ENCODE measurements at regions of chr2 and their contacts with region 1.

Region 1: DNA sequence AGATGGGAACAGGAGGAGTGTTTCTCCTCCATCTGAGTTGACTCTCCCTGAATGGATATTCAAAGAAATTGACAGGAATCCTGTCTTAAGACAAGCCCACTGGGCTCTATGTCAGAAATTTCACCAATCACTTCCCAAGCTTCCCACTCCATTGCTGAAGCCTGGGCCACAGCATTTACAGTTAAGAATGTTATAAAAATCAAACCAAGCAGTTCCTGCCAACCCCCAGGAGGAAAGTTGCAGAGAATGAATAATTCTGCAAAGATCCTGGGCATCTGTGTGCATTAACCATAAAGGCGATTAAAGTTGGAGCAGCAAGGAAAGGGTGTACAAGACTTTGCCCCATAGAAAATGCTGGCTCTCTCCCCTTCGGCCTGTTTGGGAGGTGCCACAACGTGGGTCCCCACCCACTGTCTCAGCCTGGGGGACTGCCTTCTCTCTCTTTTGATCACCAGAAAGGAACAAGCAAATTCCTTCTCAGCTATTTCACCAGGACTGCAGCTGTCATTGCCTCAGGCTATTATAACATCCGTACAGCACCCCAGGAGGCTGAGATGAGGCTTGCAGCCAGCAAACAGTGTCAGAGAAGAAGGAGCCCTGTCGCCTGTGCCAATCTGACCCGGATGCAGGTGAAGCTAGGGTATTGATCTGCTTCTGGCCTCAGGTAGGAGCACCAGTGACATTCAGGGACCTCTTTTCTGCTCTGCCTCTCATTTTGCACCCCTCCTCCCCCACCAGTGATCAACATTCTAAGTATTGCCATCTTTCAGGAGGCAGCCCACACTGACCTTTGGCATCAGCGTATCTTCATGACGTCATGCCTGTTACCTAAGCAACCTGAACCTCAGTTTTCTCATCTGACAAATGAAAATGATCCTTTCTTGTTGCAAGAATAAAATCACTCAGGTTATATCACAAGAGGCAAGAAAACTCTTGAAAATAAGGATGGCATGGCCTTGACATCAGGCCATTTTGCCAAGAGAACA is 219.0 kb downstream of the SH3BP4 start:
- DNase-seq: peak; percentile 89 to 99
- H3K4me3 ChIP-seq: peak overlapping the region; percentile 14; the same call in 1 of the 2 replicates
- H3K27ac ChIP-seq: peak overlapping the region; percentile 94
- H3K4me1 ChIP-seq: peaks cover 41% of the 10 kb centered on the region
- H3K27me3 ChIP-seq: no peaks in the 10 kb centered on the region
- CTCF ChIP-seq: peak; percentile 48

Region 2: GRCh38 chr2:235324324-235324723 is 153.5 kb after region 1 on chr2:
- CTCF ChIA-PET with region 1: no interaction called
- POLR2A ChIA-PET with region 1: no interaction called
- intact Hi-C with region 1: loop called (anchors 5 kb)
- DNase-seq: no peak
- H3K4me3 ChIP-seq: no peak overlapping the region
- H3K27ac ChIP-seq: no peak overlapping the region
- H3K4me1 ChIP-seq: no peaks in the 10 kb centered on the region
- H3K27me3 ChIP-seq: no peaks in the 10 kb centered on the region
- CTCF ChIP-seq: no peak

Region 3: GRCh38 chr2:235347691-235348090 is 176.9 kb after region 1 on chr2:
- CTCF ChIA-PET with region 1: no interaction called
- POLR2A ChIA-PET with region 1: no interaction called
- intact Hi-C with region 1: no loop called
- DNase-seq: peak; percentile 40 to 65
- H3K4me3 ChIP-seq: no peak overlapping the region
- H3K27ac ChIP-seq: no peak overlapping the region
- H3K4me1 ChIP-seq: peaks cover 10% of the 10 kb centered on the region
- H3K27me3 ChIP-seq: no peaks in the 10 kb centered on the region
- CTCF ChIP-seq: no peak

Region 4: GRCh38 chr2:235458839-235459273 is 288.0 kb after region 1 on chr2:
- CTCF ChIA-PET with region 1: no interaction called
- POLR2A ChIA-PET with region 1: no interaction called
- intact Hi-C with region 1: loop called (anchors 5 kb)
- DNase-seq: peak; percentile 93 to 97
- H3K4me3 ChIP-seq: no peak overlapping the region
- H3K27ac ChIP-seq: peak overlapping the region; percentile 43
- H3K4me1 ChIP-seq: peaks cover 22% of the 10 kb centered on the region
- H3K27me3 ChIP-seq: no peaks in the 10 kb centered on the region
- CTCF ChIP-seq: no peak

Region 5: GRCh38 chr2:235493775-235494715 is 323.2 kb after region 1 on chr2 and contains the start of gene AGAP1:
- CTCF ChIA-PET with region 1: no interaction called
- POLR2A ChIA-PET with region 1: no interaction called
- intact Hi-C with region 1: loop called (anchors 2 kb)
- DNase-seq: peak; percentile 75 to 97
- H3K4me3 ChIP-seq: peak within 1 kb of the TSS; percentile 77
- H3K27ac ChIP-seq: peak within 1 kb of the TSS; percentile 69
- H3K4me1 ChIP-seq: peaks cover 20% of the 10 kb centered on the region
- H3K27me3 ChIP-seq: no peaks in the 10 kb centered on the region
- CTCF ChIP-seq: no peak
- total RNA-seq, gene AGAP1: 91.4 and 107 TPM in 2 replicates

Region 6: DNA sequence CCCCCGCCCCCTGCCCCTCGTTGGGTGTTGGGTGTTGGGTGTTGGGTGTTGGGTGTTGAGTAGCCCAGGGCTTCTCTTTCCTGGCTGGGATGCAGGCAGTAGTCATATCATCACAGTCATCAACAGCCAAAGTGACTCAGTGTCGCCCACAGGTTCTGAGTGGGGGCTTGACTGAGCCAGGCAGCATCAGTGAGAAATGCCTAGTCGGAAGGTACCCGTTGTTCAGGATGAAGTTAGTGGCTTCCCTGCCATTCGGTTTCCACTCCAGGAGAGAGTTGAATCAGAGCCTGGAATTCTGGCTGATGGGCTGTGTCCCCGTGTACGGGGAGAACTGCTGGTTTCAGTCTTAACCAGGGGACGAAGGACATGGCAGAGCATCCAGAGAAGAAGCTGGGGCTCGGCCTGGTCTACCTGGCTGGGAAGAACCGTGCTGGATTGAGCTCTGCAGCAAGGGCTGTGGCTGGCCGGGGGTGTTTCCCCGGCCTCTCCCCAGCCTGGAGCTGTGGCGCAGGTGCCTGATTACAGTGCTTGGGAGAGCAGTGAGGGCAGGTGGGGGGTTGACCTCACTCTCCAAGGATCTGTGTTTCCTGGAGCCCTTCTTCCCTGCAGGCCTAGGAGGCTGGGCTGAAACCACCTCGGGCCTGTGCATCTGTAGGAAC is 372.4 kb after region 1 on chr2:
- CTCF ChIA-PET with region 1: no interaction called
- POLR2A ChIA-PET with region 1: no interaction called
- intact Hi-C with region 1: loop called (anchors 1 kb)
- DNase-seq: peak; percentile 71 to 79
- H3K4me3 ChIP-seq: peak overlapping the region; percentile 49; the same call in 1 of the 2 replicates
- H3K27ac ChIP-seq: peak overlapping the region; percentile 91
- H3K4me1 ChIP-seq: peaks cover 58% of the 10 kb centered on the region
- H3K27me3 ChIP-seq: no peaks in the 10 kb centered on the region
- CTCF ChIP-seq: no peak

Region 7: DNA sequence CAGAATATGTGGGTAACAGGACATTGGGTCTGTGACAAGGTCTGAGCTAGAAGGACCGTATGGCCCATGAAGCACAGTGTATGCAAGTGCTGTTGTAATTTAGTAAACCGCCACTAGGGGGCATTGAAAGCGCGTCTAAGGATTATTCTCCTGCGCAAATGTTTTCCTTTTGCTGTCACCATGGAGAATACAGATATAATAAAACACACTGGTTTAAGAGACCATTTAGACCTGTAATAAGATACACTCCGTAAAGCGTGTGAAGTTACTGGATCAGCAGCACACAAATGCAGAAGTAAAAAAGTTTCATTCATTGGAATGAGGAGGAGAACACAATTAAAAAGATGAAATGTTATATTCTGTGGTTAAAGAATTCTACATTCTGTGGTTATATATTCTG is 595.4 kb after region 1 on chr2:
- CTCF ChIA-PET with region 1: interaction called, 15 read pairs
- POLR2A ChIA-PET with region 1: no interaction called
- intact Hi-C with region 1: no loop called
- DNase-seq: peak; percentile 81 to 82
- H3K4me3 ChIP-seq: no peak overlapping the region
- H3K27ac ChIP-seq: no peak overlapping the region
- H3K4me1 ChIP-seq: no peaks in the 10 kb centered on the region
- H3K27me3 ChIP-seq: no peaks in the 10 kb centered on the region
- CTCF ChIP-seq: peak; percentile 99